ENCODE measurements at regions of chr12 and their contacts with region 1.

Region 1: GRCh38 chr12:110012137-110012536 is 12.9 kb downstream of the ANKRD13A start:
- DNase-seq: peak in 4 of 14 experiments; percentile 8 to 64 (median 54)
- ATAC-seq: peak; percentile 70
- H3K4me3 ChIP-seq: no peak overlapping the region
- H3K4me3 Mint-ChIP-seq: peak overlapping the region; percentile 45
- H3K27ac ChIP-seq: peak overlapping the region in 1 of 2 donors; percentile 57
- H3K27ac Mint-ChIP-seq: peak overlapping the region; percentile 89
- H3K4me1 ChIP-seq: peaks cover 37% of the 10 kb centered on the region
- H3K4me1 Mint-ChIP-seq: peaks cover 63% of the 10 kb centered on the region
- H3K27me3 ChIP-seq: no peaks in the 10 kb centered on the region
- H3K27me3 Mint-ChIP-seq: no peaks in the 10 kb centered on the region
- CTCF ChIP-seq: no peak

Region 2: GRCh38 chr12:109804820-109805761 is 207.0 kb before region 1 on chr12:
- CTCF ChIA-PET with region 1: no interaction called
- POLR2A ChIA-PET with region 1: no interaction called
- intact Hi-C with region 1: loop called in 1 of 2 experiments (anchors 2 kb)
- DNase-seq: peak; percentile 53 to 81 (median 62)
- ATAC-seq: peak; percentile 82
- H3K4me3 ChIP-seq: no peak overlapping the region
- H3K4me3 Mint-ChIP-seq: no peak overlapping the region
- H3K27ac ChIP-seq: no peak overlapping the region
- H3K27ac Mint-ChIP-seq: no peak overlapping the region
- H3K4me1 ChIP-seq: peaks cover 6% of the 10 kb centered on the region
- H3K4me1 Mint-ChIP-seq: no peaks in the 10 kb centered on the region
- H3K27me3 ChIP-seq: no peaks in the 10 kb centered on the region
- H3K27me3 Mint-ChIP-seq: peaks cover 5% of the 10 kb centered on the region
- CTCF ChIP-seq: peak; percentile 97

Region 3: DNA sequence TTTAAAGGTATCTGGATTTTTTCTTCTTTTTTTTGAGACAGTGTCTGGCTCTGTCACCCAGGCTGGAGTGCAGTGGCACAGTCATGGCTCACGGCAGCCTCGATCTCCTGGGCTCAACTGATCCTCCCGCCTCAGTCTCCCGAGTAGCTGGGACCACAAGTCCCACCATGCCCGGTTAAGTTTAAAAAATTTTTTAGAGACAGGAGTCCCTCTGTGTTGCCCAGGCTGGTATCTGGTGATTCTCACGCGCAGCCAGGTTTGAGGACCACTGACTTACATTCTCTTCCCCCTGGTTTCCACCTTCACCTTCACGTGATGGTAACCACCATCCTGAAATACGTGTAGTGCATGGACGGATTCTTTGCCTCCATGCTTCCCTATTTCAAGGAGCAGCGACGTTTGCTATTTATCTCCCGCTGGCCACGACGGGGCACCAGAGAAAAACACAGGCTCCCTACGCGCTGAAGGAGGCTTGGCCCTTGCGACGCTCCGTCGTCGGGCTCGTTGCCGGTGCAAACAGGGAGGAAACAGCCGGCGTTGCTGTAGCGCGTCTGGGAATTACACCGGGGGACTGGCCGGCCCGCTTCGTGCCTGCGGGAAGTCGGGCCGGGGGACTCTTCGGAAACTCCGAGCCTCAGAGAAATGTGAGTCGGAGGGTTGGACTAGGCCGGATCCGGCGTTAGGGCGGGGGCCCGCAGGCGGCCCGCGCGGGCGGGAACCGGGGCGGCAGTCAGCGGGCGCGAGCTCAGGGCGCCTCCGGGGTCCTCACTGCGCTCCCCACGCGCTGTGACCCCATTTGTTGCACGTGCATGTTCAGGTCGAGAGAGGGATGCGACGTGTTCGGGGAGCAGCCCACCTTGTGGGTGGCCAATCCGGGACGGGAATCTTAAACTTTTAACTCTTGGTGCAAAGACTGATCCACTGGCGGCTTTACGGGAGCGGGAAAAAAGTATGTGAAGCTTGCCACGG is 112.1 kb before region 1 on chr12 and contains the start of gene TCHP:
- CTCF ChIA-PET with region 1: no interaction called
- POLR2A ChIA-PET with region 1: no interaction called
- intact Hi-C with region 1: loop called in 1 of 2 experiments (anchors 5 kb)
- DNase-seq: peak; percentile 59 to 90 (median 69)
- ATAC-seq: peak; percentile 93
- H3K4me3 ChIP-seq: peak within 1 kb of the TSS; percentile 72
- H3K4me3 Mint-ChIP-seq: peak within 1 kb of the TSS; percentile 89
- H3K27ac ChIP-seq: peak within 1 kb of the TSS; percentile 55 to 64
- H3K27ac Mint-ChIP-seq: peak within 1 kb of the TSS; percentile 86
- H3K4me1 ChIP-seq: peaks cover 28% of the 10 kb centered on the region
- H3K4me1 Mint-ChIP-seq: peaks cover 25% of the 10 kb centered on the region
- H3K27me3 ChIP-seq: no peaks in the 10 kb centered on the region
- H3K27me3 Mint-ChIP-seq: no peaks in the 10 kb centered on the region
- CTCF ChIP-seq: no peak
- total RNA-seq, gene TCHP: 13.2 to 13.6 TPM

Region 4: GRCh38 chr12:109934026-109934425 is 78.1 kb before region 1 on chr12:
- CTCF ChIA-PET with region 1: no interaction called
- POLR2A ChIA-PET with region 1: no interaction called
- intact Hi-C with region 1: loop called (anchors 1 to 5 kb)
- DNase-seq: peak in 3 of 14 experiments; percentile 19 to 39 (median 19)
- ATAC-seq: no peak
- H3K4me3 ChIP-seq: no peak overlapping the region
- H3K4me3 Mint-ChIP-seq: no peak overlapping the region
- H3K27ac ChIP-seq: no peak overlapping the region
- H3K27ac Mint-ChIP-seq: no peak overlapping the region
- H3K4me1 ChIP-seq: no peaks in the 10 kb centered on the region
- H3K4me1 Mint-ChIP-seq: no peaks in the 10 kb centered on the region
- H3K27me3 ChIP-seq: no peaks in the 10 kb centered on the region
- H3K27me3 Mint-ChIP-seq: no peaks in the 10 kb centered on the region
- CTCF ChIP-seq: no peak

Region 5: GRCh38 chr12:110382683-110383082 is 370.5 kb after region 1 on chr12:
- CTCF ChIA-PET with region 1: no interaction called
- POLR2A ChIA-PET with region 1: no interaction called
- intact Hi-C with region 1: no loop called
- DNase-seq: no peak
- ATAC-seq: no peak
- H3K4me3 ChIP-seq: no peak overlapping the region
- H3K4me3 Mint-ChIP-seq: no peak overlapping the region
- H3K27ac ChIP-seq: no peak overlapping the region
- H3K27ac Mint-ChIP-seq: no peak overlapping the region
- H3K4me1 ChIP-seq: peaks cover 2% of the 10 kb centered on the region
- H3K4me1 Mint-ChIP-seq: no peaks in the 10 kb centered on the region
- H3K27me3 ChIP-seq: no peaks in the 10 kb centered on the region
- H3K27me3 Mint-ChIP-seq: no peaks in the 10 kb centered on the region
- CTCF ChIP-seq: no peak

Measured in CD4-positive, alpha-beta T cell (primary cell).